ENCODE measurements at regions of chr12 and their contacts with region 1.

Region 1: GRCh38 chr12:12611512-12612306 is at the start of gene CREBL2:
- H3K4me3 Mint-ChIP-seq: peak within 1 kb of the TSS; percentile 95
- H3K27ac Mint-ChIP-seq: peak within 1 kb of the TSS; percentile 98
- H3K4me1 Mint-ChIP-seq: peaks cover 71% of the 10 kb centered on the region
- H3K27me3 Mint-ChIP-seq: no peaks in the 10 kb centered on the region

Region 2: DNA sequence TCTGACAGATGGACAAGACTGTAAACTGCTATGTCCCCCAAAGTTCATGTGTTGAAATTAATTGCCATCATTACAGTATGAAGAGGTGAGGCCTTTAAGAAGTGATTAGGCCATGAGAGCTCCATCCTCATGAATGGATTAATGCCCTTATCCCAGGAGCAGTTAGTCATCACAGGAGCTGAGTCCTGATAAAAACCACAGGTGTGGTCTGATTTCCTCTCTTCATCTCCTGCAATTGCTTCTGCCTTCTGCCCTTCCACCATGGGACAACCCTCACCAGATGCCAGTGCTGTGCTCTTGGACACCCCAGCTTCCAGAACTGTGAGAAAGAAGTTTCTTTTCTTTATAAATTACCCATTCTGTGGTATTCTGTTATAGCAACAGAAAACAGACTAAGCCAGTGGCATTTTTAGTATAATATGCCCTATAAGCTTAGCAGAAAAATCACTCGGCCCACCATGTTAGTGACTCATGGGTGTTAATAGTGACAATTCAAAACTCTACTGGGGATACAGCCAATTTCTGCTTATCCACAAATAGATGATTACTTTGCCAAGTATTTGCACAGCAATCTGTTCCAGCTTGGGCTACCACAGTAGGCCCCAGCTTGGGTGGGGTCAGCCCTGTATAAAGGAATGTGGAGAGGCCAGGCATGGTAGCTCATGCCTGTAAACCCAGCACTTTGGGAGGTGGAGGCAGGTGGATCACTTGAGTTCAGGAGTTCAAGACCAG is 669.9 kb before region 1 on chr12:
- intact Hi-C with region 1: no loop called
- H3K4me3 Mint-ChIP-seq: no peak overlapping the region
- H3K27ac Mint-ChIP-seq: no peak overlapping the region
- H3K4me1 Mint-ChIP-seq: no peaks in the 10 kb centered on the region
- H3K27me3 Mint-ChIP-seq: peaks cover 4% of the 10 kb centered on the region

Region 3: GRCh38 chr12:12376646-12377448 is 234.9 kb before region 1 on chr12:
- intact Hi-C with region 1: loop called (anchors 2 kb)
- H3K4me3 Mint-ChIP-seq: no peak overlapping the region
- H3K27ac Mint-ChIP-seq: no peak overlapping the region
- H3K4me1 Mint-ChIP-seq: peaks cover 36% of the 10 kb centered on the region
- H3K27me3 Mint-ChIP-seq: no peaks in the 10 kb centered on the region

Region 4: DNA sequence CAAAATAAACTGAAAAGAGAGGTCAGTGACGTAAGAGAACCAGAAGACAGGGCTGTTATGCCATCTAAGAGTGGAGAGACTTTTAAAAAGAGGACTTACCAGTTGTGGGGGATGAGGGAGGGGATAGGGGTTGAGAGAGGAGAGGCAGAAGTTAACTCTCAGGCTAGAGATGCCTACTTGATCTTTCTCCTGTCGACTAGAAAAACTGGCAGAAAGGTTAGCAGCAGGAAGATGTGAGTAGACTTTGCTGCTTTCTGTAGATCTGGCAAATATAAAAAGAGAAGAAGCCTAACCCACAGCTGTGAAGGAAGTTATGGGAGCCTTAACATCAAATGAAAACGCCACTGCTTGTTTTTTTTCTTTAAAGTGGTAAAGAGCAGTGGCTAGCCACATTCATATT is 10.7 kb after region 1 on chr12:
- intact Hi-C with region 1: loop called (anchors 1 kb)
- H3K4me3 Mint-ChIP-seq: peak overlapping the region; percentile 65
- H3K27ac Mint-ChIP-seq: peak overlapping the region; percentile 84
- H3K4me1 Mint-ChIP-seq: peaks cover 97% of the 10 kb centered on the region
- H3K27me3 Mint-ChIP-seq: no peaks in the 10 kb centered on the region

Region 5: DNA sequence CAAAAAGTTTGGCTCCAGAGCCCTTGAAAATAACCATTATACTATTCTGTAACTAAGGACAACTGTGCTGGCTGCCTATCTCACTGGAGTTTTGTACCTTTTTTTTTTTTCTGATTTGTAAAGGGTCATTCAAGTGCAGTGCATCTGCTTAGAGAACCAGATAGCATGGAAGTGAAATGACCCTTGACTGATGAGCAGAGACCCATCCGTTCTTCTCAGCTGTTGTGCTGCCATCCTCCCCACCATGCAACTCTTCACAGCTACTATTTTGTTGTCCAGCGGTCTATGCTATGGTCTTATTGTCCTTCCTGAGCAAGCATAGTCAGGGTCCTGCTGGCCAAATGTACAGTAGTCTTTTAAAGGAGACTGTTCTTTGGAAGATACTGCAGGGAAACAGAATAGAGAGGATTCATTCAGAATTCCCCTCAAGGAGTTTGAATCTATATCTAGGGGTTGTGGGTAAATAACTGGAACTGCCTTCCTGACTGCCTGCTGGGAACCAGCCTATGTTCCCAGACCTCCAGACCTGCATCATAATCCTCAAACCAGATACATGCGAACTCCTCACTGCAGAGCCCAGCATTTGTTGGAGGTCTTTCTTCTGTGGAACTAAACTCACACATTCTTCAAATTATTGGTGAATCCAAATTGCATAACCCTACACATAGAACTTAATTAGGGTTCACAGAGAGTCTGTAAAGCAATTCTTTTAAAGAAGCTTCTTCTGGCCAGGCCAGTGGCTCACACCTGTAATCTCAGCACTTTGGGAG is 43.2 kb after region 1 on chr12:
- intact Hi-C with region 1: loop called (anchors 5 kb)
- H3K4me3 Mint-ChIP-seq: no peak overlapping the region
- H3K27ac Mint-ChIP-seq: peak overlapping the region; percentile 41
- H3K4me1 Mint-ChIP-seq: peaks cover 20% of the 10 kb centered on the region
- H3K27me3 Mint-ChIP-seq: no peaks in the 10 kb centered on the region

Region 6: GRCh38 chr12:12872139-12872881 is 260.6 kb after region 1 on chr12:
- intact Hi-C with region 1: no loop called
- H3K4me3 Mint-ChIP-seq: no peak overlapping the region
- H3K27ac Mint-ChIP-seq: no peak overlapping the region
- H3K4me1 Mint-ChIP-seq: peaks cover 6% of the 10 kb centered on the region
- H3K27me3 Mint-ChIP-seq: no peaks in the 10 kb centered on the region

Measured in dendritic cell treated with granulocyte-macrophage colony-stimulating factor and Interleukin-4, amounts not matched to agents 40 ng/mL and 50 ng/mL, for 4 days (primary cell).